ENCODE measurements at regions of chr21 and their contacts with region 1.

Region 1: GRCh38 chr21:18936549-18936948 is 533.0 kb upstream of the TMPRSS15 start:
- DNase-seq: no peak
- ATAC-seq: no peak
- H3K4me3 ChIP-seq: no peak overlapping the region
- H3K27ac ChIP-seq: no peak overlapping the region
- H3K4me1 ChIP-seq: no peaks in the 10 kb centered on the region
- H3K27me3 ChIP-seq: no peaks in the 10 kb centered on the region

Region 2: GRCh38 chr21:19640964-19641363 is 704.4 kb after region 1 on chr21:
- intact Hi-C with region 1: loop called in 1 of 2 experiments (anchors 10 kb)
- DNase-seq: no peak
- ATAC-seq: no peak
- H3K4me3 ChIP-seq: no peak overlapping the region
- H3K27ac ChIP-seq: no peak overlapping the region
- H3K4me1 ChIP-seq: no peaks in the 10 kb centered on the region
- H3K27me3 ChIP-seq: no peaks in the 10 kb centered on the region